ENCODE measurements at regions of chr7 and their contacts with region 1.

Region 1: DNA sequence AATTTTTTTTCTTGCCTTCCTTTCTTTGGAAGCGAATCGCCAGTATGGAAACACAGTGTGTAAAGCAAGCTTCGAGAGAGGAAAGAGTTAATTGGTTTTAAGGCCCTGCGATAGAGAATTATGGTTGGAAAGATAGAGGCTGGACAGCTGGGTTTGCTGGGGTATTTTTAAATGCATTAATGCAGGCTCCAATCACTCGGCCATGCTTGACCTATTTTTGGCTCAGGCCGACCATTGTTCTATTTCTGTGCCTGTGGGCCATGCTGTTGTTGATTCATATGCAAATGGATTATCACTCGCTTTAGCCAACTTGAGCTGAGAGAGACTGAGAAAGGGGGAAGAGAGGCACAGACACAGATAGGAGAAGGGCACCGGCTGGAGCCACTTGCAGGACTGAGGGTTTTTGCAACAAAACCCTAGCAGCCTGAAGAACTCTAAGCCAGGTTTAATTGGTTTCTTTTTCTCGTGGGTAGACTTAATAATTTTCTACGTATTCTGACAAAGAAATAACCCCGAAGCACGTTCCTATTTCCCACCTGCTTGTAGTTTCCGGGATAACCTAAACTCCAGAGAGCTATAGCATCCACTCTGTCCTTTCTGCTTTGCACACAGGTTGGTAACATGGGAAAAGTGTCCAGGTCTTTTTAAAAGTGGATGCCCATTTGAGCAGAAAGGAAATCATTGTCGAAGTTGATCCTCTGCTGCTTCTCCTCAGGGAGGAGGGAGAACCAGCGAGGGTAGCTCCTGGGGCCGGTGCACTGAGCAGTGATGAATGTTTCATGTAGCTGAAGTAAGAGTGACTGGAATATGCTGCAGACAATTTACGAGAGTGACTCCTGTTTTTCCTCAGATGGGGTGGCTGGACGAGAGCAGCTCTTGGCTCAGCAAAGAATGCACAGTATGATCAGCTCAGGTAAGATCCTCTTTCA is at the start of gene HDAC9:
- DNase-seq: peak; percentile 32
- ATAC-seq: peak; percentile 97
- H3K4me3 Mint-ChIP-seq: peak within 1 kb of the TSS; percentile 79
- H3K27ac Mint-ChIP-seq: peak within 1 kb of the TSS; percentile 97
- H3K4me1 Mint-ChIP-seq: peaks cover 58% of the 10 kb centered on the region
- H3K27me3 Mint-ChIP-seq: no peaks in the 10 kb centered on the region
- CTCF ChIP-seq: no peak
- total RNA-seq, gene HDAC9: 14.6 to 18.8 TPM (median 18.0 TPM) in 3 replicates

Region 2: DNA sequence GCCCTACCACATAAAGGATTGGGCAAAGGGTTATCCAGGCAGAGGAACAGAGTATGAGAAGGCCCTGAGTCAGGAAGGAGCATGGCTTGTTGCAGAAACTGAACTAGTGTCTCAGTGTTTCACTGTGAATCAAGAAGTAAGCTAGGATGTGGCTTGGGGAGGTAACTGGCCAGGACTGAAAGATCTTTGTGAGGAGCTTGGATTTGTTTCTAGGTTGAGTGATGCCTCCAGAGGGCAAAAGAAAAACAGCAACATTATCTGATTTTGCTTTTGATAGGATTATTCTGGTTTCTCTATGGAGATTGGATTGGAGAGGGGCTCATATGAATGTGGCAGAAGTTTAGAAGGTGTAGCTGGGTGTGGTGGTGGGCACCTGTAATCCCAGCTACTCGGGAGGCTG is 138.0 kb before region 1 on chr7:
- CTCF ChIA-PET with region 1: interaction called, 19 read pairs
- POLR2A ChIA-PET with region 1: no interaction called
- DNase-seq: no peak
- ATAC-seq: peak; percentile 55
- H3K4me3 Mint-ChIP-seq: no peak overlapping the region
- H3K27ac Mint-ChIP-seq: no peak overlapping the region
- H3K4me1 Mint-ChIP-seq: peaks cover 18% of the 10 kb centered on the region
- H3K27me3 Mint-ChIP-seq: no peaks in the 10 kb centered on the region
- CTCF ChIP-seq: no peak; the same call in 1 of the 2 replicates

Region 3: GRCh38 chr7:18508443-18509427 is 13.1 kb after region 1 on chr7:
- CTCF ChIA-PET with region 1: interaction called, 13 read pairs
- POLR2A ChIA-PET with region 1: interaction called, 4 read pairs
- DNase-seq: no peak
- ATAC-seq: peak; percentile 75
- H3K4me3 Mint-ChIP-seq: no peak overlapping the region
- H3K27ac Mint-ChIP-seq: peak overlapping the region; percentile 67
- H3K4me1 Mint-ChIP-seq: peaks cover 30% of the 10 kb centered on the region
- H3K27me3 Mint-ChIP-seq: no peaks in the 10 kb centered on the region
- CTCF ChIP-seq: no peak